ENCODE measurements at regions of chr13 and their contacts with region 1.

Region 1: GRCh38 chr13:49300739-49301589 is 53.2 kb downstream of the CDADC1 start:
- DNase-seq: peak; percentile 78
- H3K4me3 Mint-ChIP-seq: peak overlapping the region; percentile 68
- H3K27ac Mint-ChIP-seq: peak overlapping the region; percentile 61
- H3K4me1 Mint-ChIP-seq: peaks cover 11% of the 10 kb centered on the region
- H3K27me3 Mint-ChIP-seq: no peaks in the 10 kb centered on the region

Region 2: GRCh38 chr13:49421391-49421790 is 120.4 kb after region 1 on chr13:
- CTCF ChIA-PET with region 1: no interaction called
- intact Hi-C with region 1: loop called (anchors 5 kb)
- DNase-seq: peak; percentile 36
- H3K4me3 Mint-ChIP-seq: no peak overlapping the region
- H3K27ac Mint-ChIP-seq: no peak overlapping the region
- H3K4me1 Mint-ChIP-seq: no peaks in the 10 kb centered on the region
- H3K27me3 Mint-ChIP-seq: no peaks in the 10 kb centered on the region

Region 3: DNA sequence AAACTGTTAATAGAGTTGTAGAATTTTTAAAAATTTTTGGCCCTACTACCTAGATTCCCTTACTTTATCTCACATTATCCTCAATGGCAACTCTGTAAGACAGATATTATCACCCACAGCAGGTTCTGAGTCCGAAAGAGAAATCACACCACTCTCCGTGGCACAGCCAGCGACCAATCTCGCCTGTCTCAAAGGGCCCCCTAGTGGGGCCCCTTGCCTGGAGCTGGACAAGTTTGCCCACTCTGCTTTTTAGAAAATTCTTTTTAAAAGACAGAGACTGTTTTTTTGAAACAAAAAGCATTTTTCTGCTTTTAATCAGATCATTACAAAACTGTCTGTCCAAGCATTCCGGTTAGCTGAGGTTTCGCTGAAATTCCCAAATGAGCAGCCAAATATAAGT is 216.5 kb after region 1 on chr13:
- CTCF ChIA-PET with region 1: no interaction called
- intact Hi-C with region 1: loop called (anchors 1 kb)
- DNase-seq: no peak
- H3K4me3 Mint-ChIP-seq: no peak overlapping the region
- H3K27ac Mint-ChIP-seq: no peak overlapping the region
- H3K4me1 Mint-ChIP-seq: no peaks in the 10 kb centered on the region
- H3K27me3 Mint-ChIP-seq: no peaks in the 10 kb centered on the region

Region 4: GRCh38 chr13:49606747-49607648 is 306.0 kb after region 1 on chr13:
- CTCF ChIA-PET with region 1: interaction called, 31 read pairs
- intact Hi-C with region 1: loop called (anchors 1 kb)
- DNase-seq: peak; percentile 92
- H3K4me3 Mint-ChIP-seq: peak overlapping the region; percentile 75
- H3K27ac Mint-ChIP-seq: peak overlapping the region; percentile 56
- H3K4me1 Mint-ChIP-seq: peaks cover 2% of the 10 kb centered on the region
- H3K27me3 Mint-ChIP-seq: no peaks in the 10 kb centered on the region

Region 5: DNA sequence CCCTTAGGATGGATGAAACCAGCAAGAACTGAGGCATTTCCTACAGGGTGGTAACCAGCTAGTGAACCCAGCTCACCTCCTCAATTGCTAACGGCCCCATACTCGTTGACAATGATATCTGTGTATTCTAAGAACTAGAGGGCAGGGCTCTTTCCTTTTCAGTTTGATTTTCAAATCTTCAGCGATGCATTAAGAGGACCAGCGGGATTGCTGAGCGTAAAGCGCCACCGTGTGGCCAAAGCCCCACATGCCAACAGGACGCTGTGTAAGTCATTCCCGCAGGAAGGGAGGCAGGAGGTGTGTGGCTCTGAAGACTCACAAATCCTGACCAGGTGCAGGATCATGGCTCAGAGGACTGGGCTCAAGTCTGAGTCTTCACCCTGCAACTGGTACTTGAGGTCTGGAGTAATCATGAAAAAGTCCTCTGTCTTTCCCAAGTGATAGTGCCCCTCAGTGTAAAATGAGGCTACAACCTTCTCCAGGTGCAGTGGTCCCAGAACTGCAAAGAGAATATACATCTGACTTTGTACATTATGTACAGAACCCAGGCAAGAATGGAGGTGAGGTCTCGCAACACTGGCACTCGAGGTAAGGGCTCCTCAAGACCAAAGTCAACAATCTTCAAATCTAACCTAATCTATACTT is 1769.2 kb after region 1 on chr13:
- CTCF ChIA-PET with region 1: no interaction called
- intact Hi-C with region 1: loop called (anchors 2 kb)
- DNase-seq: peak; percentile 88
- H3K4me3 Mint-ChIP-seq: no peak overlapping the region
- H3K27ac Mint-ChIP-seq: no peak overlapping the region
- H3K4me1 Mint-ChIP-seq: peaks cover 3% of the 10 kb centered on the region
- H3K27me3 Mint-ChIP-seq: peaks cover 3% of the 10 kb centered on the region